Right ventricle myocardium inferior (tissue), 1 donor: ENCODE measurements at regions of chr3 and their contacts with region 1.

Region 1: DNA sequence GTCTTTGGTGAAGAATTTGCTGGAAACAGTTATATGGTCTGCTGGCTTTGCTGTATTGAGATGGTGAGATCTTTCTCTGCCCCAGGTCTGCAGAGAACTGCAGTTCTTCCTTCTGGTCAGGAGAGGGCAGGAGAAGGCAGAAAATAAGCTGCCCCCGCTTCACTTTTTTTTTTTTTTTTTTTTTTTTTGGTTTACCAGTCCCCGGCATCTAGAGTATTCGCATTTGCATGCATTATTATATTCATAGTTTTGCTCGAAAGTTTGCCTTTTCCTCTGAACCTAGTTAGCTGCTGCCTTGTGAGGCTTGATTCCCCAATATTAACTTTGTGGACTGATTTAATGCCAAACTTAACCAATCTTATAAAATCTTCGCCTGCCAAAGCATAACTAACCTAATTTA is 10.6 kb upstream of the PARL start:
- DNase-seq: no peak
- ATAC-seq: no peak

Region 2: GRCh38 chr3:184017672-184018423 is 122.6 kb after region 1 on chr3 and contains the start of gene ABCC5:
- intact Hi-C with region 1: loop called (anchors 2 kb)
- DNase-seq: peak; percentile 97
- ATAC-seq: peak; percentile 99
- total RNA-seq, gene ABCC5: 48.2 TPM

Region 3: DNA sequence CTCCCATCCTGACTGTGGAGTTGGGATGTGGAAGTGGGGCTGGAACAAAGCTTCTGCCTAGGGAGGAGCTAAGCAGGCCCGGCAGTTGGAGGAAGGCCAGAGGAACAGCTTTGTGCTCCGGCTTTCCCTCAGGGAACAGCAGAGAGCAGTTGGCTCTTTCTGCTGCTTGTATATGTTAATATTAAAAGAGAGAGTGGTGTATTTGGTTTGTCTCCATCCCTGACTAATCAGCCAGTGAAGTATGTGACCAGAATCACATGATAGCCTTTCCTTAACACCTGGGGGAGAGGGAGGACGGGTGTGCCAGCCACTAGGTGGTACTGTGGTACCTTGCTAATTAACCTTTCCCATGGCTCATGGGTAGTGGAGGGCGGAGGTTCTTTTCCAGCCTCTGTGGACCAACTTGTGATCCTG is 249.8 kb after region 1 on chr3:
- intact Hi-C with region 1: loop called (anchors 10 kb)
- DNase-seq: no peak
- ATAC-seq: peak; percentile 73

Region 4: GRCh38 chr3:184298759-184299496 is 403.6 kb after region 1 on chr3 and contains the start of gene PSMD2:
- intact Hi-C with region 1: loop called (anchors 5 kb)
- DNase-seq: peak; percentile 99
- ATAC-seq: peak; percentile 99
- total RNA-seq, gene PSMD2: 228 TPM